ENCODE measurements at regions of chr1 and their contacts with region 1.

Region 1: DNA sequence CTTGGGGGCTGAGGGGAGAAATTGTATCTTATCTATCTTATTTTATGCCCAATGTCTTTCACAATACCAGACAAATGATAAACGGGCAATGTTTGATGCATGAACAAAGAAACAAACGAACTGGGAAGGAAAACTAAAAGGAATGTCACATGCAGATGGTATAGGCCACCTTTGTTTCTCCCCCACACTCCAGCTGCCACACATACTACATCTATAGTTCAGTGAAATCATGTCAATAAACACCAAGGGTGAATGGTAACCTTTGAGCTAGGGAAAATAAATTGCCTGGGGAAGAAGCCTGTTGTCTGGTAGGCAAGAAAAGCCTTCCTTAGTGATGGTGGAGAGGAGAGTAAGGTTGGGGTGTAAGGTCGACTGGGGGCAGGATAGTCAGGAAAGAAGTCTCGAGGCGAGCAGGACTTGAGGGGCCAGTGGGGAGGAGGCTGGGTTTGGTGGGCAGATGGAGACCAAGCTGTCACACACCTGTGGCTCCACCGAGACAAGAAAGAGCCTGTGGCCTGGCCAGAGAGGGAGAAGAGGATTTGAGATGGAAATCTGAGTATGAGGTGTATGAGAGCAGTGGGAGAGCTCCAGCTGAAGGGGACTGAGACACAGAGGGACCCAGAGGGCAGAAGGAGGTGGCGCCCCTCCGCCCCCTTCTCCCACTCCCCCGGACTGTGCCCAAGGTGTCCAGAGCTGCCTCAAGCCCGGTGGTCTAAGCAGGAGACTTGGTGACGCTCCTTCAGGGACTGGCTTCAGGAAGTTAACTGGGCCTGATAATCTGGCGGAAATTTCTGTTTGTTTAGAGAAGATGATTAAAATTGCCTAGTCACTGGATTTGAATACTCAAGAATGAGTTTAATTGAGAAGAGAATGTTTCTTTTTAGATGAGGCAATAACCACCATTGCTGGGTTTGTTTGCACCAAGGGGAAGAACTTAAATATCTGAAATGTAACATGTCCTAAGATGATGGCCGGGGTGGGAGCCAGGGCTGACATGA is 37.3 kb downstream of the ATF3 start:
- DNase-seq: no peak
- ATAC-seq: no peak
- H3K4me3 ChIP-seq: no peak overlapping the region
- H3K27ac ChIP-seq: no peak overlapping the region
- H3K4me1 ChIP-seq: peaks cover 0 to 18% (median 8%) of the 10 kb centered on the region in 9 donors
- H3K27me3 ChIP-seq: no peaks in the 10 kb centered on the region
- CTCF ChIP-seq: no peak

Region 2: DNA sequence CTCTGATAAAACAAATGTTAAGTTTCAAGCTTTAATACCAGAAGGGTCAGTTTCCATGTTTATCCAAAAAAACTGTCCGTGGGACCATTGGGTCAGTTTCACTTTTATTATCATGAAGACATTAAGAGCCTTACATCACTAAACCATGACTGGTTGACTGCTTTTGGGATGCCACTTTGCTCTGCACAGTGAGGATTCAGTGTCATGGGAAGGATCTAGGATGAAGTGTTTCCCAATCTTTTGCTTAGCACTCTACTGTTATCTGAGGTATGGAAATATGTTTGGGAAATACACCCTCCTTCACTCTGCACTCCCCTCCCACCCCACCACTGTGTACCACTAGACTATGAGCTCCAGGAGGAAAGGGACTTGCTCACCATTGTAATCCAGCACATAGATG is 421.5 kb after region 1 on chr1:
- intact Hi-C with region 1: loop called in 1 of 10 experiments (anchors 5 kb)
- DNase-seq: no peak
- ATAC-seq: no peak
- H3K4me3 ChIP-seq: no peak overlapping the region
- H3K27ac ChIP-seq: no peak overlapping the region
- H3K4me1 ChIP-seq: peaks cover 0 to 26% (median 0%) of the 10 kb centered on the region in 9 donors
- H3K27me3 ChIP-seq: no peaks in the 10 kb centered on the region
- CTCF ChIP-seq: no peak